ENCODE measurements at regions of chr1 and their contacts with region 1.

Region 1: GRCh38 chr1:212608209-212608955 is at the start of gene ATF3:
- DNase-seq: peak; percentile 98 to 99 (median 98)
- ATAC-seq: peak; percentile 90
- H3K4me3 ChIP-seq: peak within 1 kb of the TSS; percentile 78
- H3K27ac ChIP-seq: peak within 1 kb of the TSS; percentile 87
- H3K4me1 ChIP-seq: peaks cover 33 to 35% of the 10 kb centered on the region in 2 experiments
- H3K27me3 ChIP-seq: peaks cover 37 to 38% of the 10 kb centered on the region in 2 experiments
- CTCF ChIP-seq: peak in 1 of 3 experiments; percentile 9; a peak in 1 of 6 replicates
- EP300 ChIP-seq: peak; percentile 81
- POLR2A ChIP-seq: peak; percentile 99
- RAD21 ChIP-seq: no peak
- polyA plus RNA-seq, gene ATF3: 6.1 to 6.8 TPM

Region 2: DNA sequence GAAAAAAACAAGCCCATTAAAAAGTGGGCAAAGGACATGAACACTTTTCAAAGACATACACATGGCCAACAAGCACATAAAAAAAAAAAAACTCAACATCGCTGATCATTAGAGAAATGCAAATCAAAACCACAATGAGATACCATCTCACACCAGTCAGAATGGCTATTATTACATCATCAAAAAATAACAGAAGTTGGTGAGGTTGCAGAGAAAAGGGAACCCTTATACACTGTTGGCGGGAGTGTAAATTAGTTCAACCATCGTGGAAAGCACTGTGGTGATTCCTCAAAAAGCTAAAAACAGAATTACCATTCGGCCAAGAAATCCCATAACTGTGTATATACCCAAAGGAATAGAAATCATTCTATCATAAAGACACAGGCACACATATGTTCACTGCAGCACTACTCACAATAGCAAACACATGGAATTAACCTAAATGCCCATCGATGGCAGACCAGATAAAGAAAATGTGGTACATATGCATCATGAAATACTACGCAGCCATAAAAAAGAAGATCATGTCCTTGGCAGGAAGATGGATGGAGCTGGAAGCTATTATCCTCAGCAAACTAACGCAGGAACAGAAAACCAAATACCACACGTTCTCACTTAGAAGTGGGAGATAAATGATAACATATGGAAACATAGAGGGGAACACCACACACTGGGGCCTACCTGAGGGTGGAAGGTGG is 643.1 kb before region 1 on chr1:
- CTCF ChIA-PET with region 1: no interaction called
- POLR2A ChIA-PET with region 1: no interaction called
- in situ Hi-C with region 1: no loop called
- intact Hi-C with region 1: no loop called
- DNase-seq: no peak
- ATAC-seq: no peak
- H3K4me3 ChIP-seq: no peak overlapping the region
- H3K27ac ChIP-seq: no peak overlapping the region
- H3K4me1 ChIP-seq: no peaks in the 10 kb centered on the region
- H3K27me3 ChIP-seq: no peaks in the 10 kb centered on the region
- CTCF ChIP-seq: no peak
- EP300 ChIP-seq: no peak
- POLR2A ChIP-seq: no peak
- RAD21 ChIP-seq: no peak

Region 3: DNA sequence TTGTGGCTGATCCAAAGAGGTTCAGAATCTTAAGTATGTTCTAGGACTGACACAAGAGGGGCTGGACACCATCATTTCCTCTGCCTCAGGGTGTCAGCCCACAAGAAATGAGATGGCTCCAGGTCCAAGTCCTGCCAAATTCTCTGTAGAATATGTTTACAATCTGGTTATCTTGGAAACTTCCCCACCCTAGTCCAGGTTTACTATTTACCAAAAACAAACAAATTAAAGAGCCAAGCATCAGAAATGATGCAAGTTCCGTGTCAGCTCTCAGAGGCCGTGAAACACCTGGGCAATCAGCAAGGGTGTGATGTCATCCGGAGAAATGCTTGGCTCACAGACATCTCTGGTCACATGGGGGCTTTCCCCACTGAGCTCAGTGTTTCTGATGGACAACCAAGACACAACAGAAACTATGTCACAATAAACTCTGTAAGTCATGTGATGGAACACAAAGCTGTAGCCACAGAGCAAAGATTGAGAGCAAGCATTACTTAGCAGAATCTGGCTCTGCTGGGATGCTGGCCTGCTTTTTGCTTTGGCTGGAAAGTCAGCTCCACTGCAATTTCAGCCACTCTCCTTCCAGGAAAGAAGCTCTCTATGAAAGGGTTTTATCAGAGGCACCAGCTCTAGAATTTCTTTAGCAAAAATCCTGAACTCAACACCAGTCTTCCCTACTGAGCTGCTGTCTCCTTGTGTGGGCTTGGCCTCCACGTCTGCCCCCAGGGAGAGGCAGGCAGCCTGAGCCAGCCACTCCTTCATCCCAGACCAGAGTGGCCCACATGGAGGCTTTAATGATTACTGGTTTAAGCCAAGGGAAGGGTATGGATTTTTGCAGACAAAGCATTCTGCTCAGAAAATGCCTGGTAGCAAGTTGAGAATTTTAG is 119.7 kb before region 1 on chr1:
- CTCF ChIA-PET with region 1: no interaction called
- POLR2A ChIA-PET with region 1: interaction called, 11 read pairs
- in situ Hi-C with region 1: no loop called
- intact Hi-C with region 1: no loop called
- DNase-seq: peak in 1 of 4 experiments; percentile 39
- ATAC-seq: peak; percentile 71
- H3K4me3 ChIP-seq: no peak overlapping the region
- H3K27ac ChIP-seq: no peak overlapping the region; the same call in 2 of the 3 replicates
- H3K4me1 ChIP-seq: peaks cover 8 to 17% of the 10 kb centered on the region in 2 experiments
- H3K27me3 ChIP-seq: peaks cover 9 to 27% of the 10 kb centered on the region in 2 experiments
- CTCF ChIP-seq: no peak
- EP300 ChIP-seq: peak; percentile 96
- POLR2A ChIP-seq: no peak
- RAD21 ChIP-seq: peak in 1 of 2 experiments; percentile 15; a peak in 1 of 4 replicates

Region 4: DNA sequence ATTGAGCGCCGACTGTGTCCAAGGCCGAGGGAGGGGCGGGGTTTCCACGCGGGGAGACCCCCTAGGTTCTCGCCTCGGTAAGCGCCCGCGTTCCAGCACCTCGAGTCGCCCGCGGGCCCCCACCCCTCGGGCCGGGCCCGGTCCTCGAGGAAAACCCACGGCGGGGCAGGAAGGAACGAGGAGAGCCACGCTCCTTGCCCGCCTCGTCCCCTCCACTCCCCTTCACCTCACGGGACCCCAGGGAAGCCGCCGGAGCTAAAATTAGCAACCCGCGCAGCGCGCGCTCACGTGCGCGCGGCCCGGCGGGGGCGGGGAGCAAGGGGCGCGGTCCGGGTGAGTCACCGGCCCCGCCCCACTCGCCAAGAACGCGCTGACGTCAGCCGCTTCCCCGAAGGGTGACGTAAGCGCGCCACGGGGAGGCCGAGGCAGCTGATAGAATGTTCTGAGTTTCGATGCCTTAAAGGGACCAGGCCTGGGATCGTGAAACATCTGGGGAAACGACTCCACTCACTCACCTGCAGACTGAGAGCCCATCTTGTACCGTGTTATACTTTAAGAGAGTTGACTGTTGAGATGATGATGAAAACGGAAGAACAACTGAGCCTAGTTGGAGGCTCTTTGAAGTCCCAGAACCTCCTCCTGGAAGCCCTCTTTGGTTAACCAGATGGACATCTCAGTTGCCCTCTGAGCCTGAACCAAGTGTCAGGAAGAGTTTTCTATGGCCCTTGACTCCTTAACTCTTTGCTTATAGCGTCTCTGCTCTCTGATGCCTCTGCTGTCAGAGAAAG is 49.5 kb before region 1 on chr1:
- CTCF ChIA-PET with region 1: no interaction called
- POLR2A ChIA-PET with region 1: interaction called, 19 read pairs
- in situ Hi-C with region 1: no loop called
- intact Hi-C with region 1: loop called (anchors 2 kb)
- DNase-seq: peak; percentile 98 to 99 (median 98)
- ATAC-seq: peak; percentile 87
- H3K4me3 ChIP-seq: peak overlapping the region; percentile 54
- H3K27ac ChIP-seq: peak overlapping the region; percentile 97
- H3K4me1 ChIP-seq: peaks cover 14 to 16% of the 10 kb centered on the region in 2 experiments
- H3K27me3 ChIP-seq: no peaks in the 10 kb centered on the region
- CTCF ChIP-seq: no peak
- EP300 ChIP-seq: no peak; the same call in 1 of the 2 replicates
- POLR2A ChIP-seq: peak; percentile 81
- RAD21 ChIP-seq: 0 out of 4 replicates have a peak, but pooled peaks of 1 of the 2 experiments have one; percentile 23

Region 5: GRCh38 chr1:212595787-212596714 is 12.3 kb before region 1 on chr1:
- CTCF ChIA-PET with region 1: interaction called, 3 read pairs
- POLR2A ChIA-PET with region 1: interaction called, 34 read pairs
- in situ Hi-C with region 1: no loop called
- intact Hi-C with region 1: no loop called
- DNase-seq: peak; percentile 67 to 73 (median 70)
- ATAC-seq: peak; percentile 94
- H3K4me3 ChIP-seq: no peak overlapping the region
- H3K27ac ChIP-seq: no peak overlapping the region
- H3K4me1 ChIP-seq: peaks cover 0 to 9% of the 10 kb centered on the region in 2 experiments; a peak in 3 of 5 replicates
- H3K27me3 ChIP-seq: peaks cover 20 to 26% of the 10 kb centered on the region in 2 experiments
- CTCF ChIP-seq: peak; percentile 73 to 81 (median 79)
- EP300 ChIP-seq: 0 out of 2 replicates have a peak, but pooled peaks have one; percentile 5
- POLR2A ChIP-seq: no peak
- RAD21 ChIP-seq: peak; percentile 53 to 64

Region 6: DNA sequence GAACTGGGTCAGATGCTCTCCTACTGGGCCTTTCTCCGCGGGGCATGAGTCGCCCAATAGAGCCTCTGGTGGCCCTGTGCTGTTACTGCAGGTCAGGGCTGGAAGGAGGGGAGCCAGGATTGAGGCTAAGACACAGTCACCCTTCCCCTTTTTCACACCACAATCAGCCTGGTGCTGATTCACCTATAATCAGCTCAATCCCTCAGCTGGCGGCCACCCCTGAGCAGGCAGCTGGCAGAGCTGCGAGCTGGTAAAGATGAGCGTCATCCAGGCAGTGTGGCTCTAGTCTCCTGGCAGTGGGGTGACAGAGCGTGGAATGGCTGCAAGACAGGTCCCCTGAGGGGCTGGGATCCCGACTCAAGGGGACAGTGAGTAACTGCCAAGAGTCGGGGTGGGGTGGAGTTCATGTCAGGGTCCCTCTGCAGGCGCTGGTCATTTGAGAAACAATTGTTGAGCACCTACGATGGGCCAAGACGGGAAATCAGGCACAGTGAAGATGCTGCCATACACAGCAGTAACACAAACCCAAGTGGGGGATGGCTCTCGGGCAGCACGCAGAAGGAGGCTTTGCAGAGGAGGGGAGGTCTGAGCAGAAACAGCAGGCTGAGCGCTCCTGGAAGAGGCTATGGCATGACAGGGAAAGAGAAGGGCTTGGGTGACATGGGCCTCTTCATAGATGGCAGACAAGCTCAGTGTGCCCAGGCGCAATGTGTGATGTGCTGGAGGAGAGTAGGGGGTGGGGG is 21.9 kb after region 1 on chr1:
- CTCF ChIA-PET with region 1: no interaction called
- POLR2A ChIA-PET with region 1: interaction called, 22 read pairs
- in situ Hi-C with region 1: no loop called
- intact Hi-C with region 1: no loop called
- DNase-seq: peak; percentile 78 to 85 (median 83)
- ATAC-seq: peak; percentile 97
- H3K4me3 ChIP-seq: no peak overlapping the region
- H3K27ac ChIP-seq: no peak overlapping the region
- H3K4me1 ChIP-seq: peaks cover 5 to 11% of the 10 kb centered on the region in 2 experiments
- H3K27me3 ChIP-seq: peaks cover 38 to 57% of the 10 kb centered on the region in 2 experiments
- CTCF ChIP-seq: peak; percentile 88 to 96 (median 89)
- EP300 ChIP-seq: no peak
- POLR2A ChIP-seq: no peak
- RAD21 ChIP-seq: peak; percentile 63 to 76

Measured in K562 (cell line).